Right ventricle myocardium superior (tissue), 1 donor: ENCODE measurements at regions of chr10 and their contacts with region 1.

Region 1: GRCh38 chr10:50421026-50421719 is 169.9 kb upstream of the ASAH2 start:
- DNase-seq: no peak
- ATAC-seq: peak; percentile 48

Region 2: DNA sequence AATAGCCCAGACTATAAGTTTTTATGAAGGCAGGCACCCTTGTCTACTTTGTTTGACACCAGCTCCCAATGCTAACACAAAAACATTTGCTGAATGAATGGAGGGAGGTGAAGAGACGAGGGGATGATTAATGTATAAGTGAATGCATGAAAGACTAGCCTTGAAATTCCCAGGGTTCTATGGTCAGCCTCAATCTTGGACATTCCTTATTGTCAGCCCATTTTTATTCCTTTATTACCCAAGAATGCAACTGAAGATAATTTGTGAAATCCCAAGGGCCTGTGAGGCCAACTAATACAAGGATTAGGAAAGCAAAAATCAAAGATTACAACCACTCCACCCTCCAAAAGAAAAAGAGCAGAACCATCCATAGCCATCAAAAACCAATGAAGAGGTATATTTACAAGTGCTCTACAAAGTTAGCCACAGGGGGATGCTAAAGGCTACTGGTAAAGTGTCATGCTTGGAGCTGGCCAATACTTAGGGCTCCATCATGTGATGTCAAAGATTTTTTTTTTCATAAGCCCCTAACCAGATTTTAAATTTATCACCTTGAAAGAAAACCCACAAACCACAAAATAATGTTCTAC is 129.8 kb before region 1 on chr10:
- intact Hi-C with region 1: loop called (anchors 10 kb)
- DNase-seq: no peak
- ATAC-seq: no peak

Region 3: GRCh38 chr10:50679149-50679548 is 258.0 kb after region 1 on chr10:
- intact Hi-C with region 1: no loop called
- DNase-seq: no peak
- ATAC-seq: no peak